GM18951 (cell line): ENCODE measurements at regions of chr22 and their contacts with region 1.

Region 1: GRCh38 chr22:31970490-31971444 is 26.4 kb downstream of the YWHAH start:
- POLR2A ChIP-seq: no peak

Region 2: DNA sequence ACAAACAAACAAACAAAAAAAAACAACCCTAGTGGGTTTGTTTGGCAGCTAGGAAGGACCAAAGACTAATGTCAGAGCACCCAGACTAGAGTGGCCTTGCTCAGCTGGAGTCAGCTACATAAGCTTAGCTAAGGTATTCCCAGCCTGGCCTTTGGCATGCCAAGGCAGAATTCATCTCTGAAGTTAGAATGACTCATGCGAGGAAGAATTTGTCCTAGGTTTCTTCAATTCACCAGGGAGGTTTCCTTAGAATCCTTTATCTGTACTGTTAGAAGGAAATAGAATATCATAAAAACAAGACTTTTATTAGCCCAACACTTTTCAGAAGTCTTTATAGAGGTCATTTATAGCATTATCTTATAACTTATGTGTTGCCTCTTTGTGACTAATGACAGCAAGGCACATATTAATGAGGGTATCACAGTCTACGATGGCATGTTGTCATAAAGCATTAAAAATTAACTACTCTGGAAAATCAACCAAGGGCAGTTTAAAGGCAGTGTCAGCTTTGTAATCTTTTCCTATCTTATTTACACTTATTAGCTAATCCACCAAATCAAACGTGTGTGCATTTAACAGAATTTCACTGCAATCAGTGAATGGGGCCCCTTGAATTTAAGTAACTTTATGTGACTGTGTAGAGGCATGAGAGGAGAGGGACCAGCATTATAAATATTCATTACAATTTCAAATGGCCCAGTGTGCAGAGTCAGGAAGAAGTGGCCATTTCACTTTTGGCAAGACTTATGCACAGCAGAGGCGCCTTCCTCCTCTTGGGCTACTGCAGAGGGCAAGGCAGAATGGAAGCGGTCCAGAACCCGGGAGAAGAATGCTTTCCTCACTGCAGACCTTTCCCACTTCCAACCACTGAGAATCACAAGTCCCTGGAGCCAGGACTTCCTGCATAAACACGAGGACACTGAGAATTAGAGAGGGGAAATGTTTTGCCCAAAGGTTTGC is 108.6 kb after region 1 on chr22:
- in situ Hi-C with region 1: loop called (anchors 10 kb)
- POLR2A ChIP-seq: no peak